HEK293 (cell line): ENCODE measurements at regions of chrX and their contacts with region 1.

Region 1: DNA sequence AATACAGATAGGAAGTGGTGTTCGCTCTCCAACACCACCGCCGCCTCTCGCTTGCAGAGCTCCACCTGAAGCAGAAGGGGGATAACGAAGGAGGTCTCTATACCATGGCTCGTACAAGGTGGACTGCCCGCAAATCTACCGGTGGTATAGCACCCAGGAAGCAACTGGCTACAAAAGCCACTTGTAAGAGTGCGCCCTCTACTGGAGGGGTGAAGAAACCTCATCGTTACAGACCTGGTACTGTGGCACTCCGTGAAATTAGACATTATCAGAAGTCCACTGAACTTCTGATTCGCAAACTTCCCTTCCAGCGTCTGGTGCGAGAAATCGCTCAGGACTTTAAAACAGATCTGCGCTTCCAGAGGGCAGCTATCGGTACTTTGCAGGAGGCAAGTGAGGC is 5.2 kb upstream of the BMP15 start:
- H3K4me3 ChIP-seq: no peak overlapping the region
- H3K27ac ChIP-seq: no peak overlapping the region
- H3K4me1 ChIP-seq: no peaks in the 10 kb centered on the region
- CTCF ChIP-seq: no peak

Region 2: GRCh38 chrX:50668860-50669259 is 236.5 kb before region 1 on chrX:
- CTCF ChIA-PET with region 1: no interaction called
- POLR2A ChIA-PET with region 1: no interaction called
- H3K4me3 ChIP-seq: no peak overlapping the region
- H3K27ac ChIP-seq: no peak overlapping the region
- H3K4me1 ChIP-seq: no peaks in the 10 kb centered on the region
- CTCF ChIP-seq: no peak

Region 3: GRCh38 chrX:50812995-50813826 is 92.1 kb before region 1 on chrX:
- CTCF ChIA-PET with region 1: interaction called, 10 read pairs
- POLR2A ChIA-PET with region 1: no interaction called
- H3K4me3 ChIP-seq: peak overlapping the region; percentile 37
- H3K27ac ChIP-seq: no peak overlapping the region; the same call in 1 of the 2 replicates
- H3K4me1 ChIP-seq: no peaks in the 10 kb centered on the region
- CTCF ChIP-seq: no peak

Region 4: DNA sequence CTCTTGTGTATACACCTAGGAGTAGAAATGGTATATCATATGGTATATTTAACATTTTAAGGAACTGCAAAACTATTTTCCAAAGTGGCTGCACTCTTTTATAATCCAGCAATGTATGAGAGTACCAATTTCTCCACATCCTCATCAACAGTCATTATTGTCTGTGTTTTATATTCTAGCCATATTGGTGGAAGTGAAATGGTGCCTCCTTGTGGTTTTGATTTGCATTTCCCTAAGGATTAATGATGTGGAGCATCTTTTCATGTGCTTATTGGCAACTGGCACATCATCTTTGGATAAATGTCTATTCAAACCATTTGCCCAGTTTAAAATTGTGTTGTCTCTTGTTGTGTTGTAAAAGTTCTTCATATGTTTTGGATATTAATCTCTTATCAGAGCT is 14.8 kb after region 1 on chrX:
- CTCF ChIA-PET with region 1: interaction called, 16 read pairs
- POLR2A ChIA-PET with region 1: no interaction called
- H3K4me3 ChIP-seq: no peak overlapping the region
- H3K27ac ChIP-seq: no peak overlapping the region
- H3K4me1 ChIP-seq: no peaks in the 10 kb centered on the region
- CTCF ChIP-seq: no peak